ENCODE measurements at regions of chr13 and their contacts with region 1.

Region 1: DNA sequence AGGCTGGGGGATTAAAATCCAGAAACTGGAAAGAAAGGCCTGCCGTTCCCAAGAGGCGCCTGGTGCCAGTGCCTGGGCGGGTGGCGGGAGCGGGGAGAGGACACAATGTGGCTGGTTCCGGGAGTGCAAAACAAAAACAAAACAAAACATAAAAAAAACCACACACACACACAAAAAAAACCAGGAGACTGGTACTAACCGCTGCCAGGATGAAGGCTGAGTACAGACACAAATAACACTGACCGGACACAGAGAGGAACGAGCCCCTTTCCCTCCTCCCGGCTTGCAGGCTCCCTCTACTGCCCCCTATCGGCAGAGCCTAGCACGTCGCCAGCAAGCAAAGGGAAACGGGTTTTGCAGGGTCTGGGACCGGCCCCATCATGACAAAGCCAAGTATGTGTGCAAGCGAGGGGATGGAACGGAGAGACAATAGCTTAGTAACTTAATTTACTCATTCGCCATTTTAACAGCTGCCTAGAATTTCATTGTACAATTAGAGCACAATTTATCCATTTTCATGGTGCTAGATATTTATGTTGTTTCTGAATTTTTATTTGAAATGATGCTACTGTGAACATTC is 17.9 kb upstream of the ZDHHC20 start:
- DNase-seq: peak; percentile 80
- H3K4me3 ChIP-seq: peak overlapping the region; percentile 26 to 52
- H3K27ac ChIP-seq: no peak overlapping the region
- H3K4me1 ChIP-seq: no peaks in the 10 kb centered on the region; a peak in 1 of 4 replicates
- H3K27me3 ChIP-seq: no peaks in the 10 kb centered on the region
- CTCF ChIP-seq: peak; percentile 89
- EP300 ChIP-seq: no peak
- RAD21 ChIP-seq: peak; percentile 68

Region 2: DNA sequence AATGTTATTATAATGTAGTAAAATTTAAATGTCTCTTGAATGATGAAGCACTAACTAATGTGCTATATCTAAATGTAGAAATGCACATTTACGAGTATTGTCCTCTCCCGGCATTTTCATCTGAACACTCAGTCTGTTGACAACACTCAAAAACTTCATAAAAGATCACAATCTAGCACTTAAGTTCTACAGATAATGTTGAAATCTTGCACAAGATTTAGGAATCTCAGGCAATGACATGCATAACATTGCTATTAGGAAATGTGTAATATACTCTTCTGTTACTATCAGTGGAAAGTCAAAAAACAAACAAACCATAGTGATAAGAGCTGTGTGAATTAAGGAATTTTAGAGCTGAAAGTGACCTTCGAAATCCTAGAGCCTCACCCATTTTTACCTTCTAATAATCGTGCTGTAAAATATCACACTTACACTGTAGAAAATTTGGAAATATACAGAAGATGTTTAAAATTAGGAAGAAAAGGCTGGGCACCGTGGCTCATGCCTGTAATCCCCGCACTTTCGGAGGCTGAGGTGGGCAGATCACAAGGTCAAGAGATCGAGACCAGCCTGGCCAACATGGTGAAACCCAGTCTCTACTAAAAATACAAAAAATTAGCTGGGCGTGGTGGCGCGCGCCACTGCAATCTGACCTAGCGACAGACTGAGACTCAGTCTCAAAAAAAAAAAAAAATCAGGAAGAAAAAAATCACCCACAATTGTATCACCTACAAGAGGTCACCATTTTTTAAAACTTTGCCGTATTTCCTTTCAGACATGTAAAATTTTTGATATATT is 536.7 kb before region 1 on chr13:
- CTCF ChIA-PET with region 1: interaction called, 15 read pairs
- POLR2A ChIA-PET with region 1: no interaction called
- DNase-seq: no peak
- H3K4me3 ChIP-seq: no peak overlapping the region
- H3K27ac ChIP-seq: no peak overlapping the region
- H3K4me1 ChIP-seq: no peaks in the 10 kb centered on the region
- H3K27me3 ChIP-seq: no peaks in the 10 kb centered on the region
- CTCF ChIP-seq: no peak
- EP300 ChIP-seq: no peak
- RAD21 ChIP-seq: no peak

Region 3: DNA sequence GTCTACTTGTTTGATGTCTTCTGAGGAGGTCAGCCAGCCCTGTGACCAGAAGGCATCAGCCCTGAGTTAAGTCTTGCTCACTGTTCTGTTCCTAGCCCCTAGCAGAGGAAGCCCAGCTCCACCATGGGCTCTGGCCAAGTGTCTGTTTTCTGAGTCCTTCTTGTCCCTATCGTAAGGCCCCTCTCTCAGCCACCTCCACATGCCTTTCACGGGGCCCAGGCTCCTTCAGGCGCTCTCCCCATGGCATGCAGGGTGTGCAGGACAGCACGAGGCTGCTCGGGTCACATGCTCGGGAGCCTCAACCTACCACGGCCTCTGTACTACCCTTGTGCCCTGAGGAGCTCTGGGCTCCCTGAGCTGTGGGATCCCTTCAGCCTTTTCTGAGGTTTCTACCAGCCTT is 367.8 kb before region 1 on chr13:
- CTCF ChIA-PET with region 1: interaction called, 19 read pairs
- POLR2A ChIA-PET with region 1: no interaction called
- DNase-seq: no peak
- H3K4me3 ChIP-seq: no peak overlapping the region
- H3K27ac ChIP-seq: no peak overlapping the region
- H3K4me1 ChIP-seq: peaks cover 0 to 11% of the 10 kb centered on the region in 2 experiments; a peak in 2 of 4 replicates
- H3K27me3 ChIP-seq: no peaks in the 10 kb centered on the region
- CTCF ChIP-seq: no peak
- EP300 ChIP-seq: no peak
- RAD21 ChIP-seq: no peak

Region 4: GRCh38 chr13:21297914-21298831 is 178.8 kb before region 1 on chr13:
- CTCF ChIA-PET with region 1: interaction called, 25 read pairs
- POLR2A ChIA-PET with region 1: no interaction called
- DNase-seq: peak; percentile 92
- H3K4me3 ChIP-seq: peak overlapping the region; percentile 95
- H3K27ac ChIP-seq: peak overlapping the region; percentile 22 to 68; a peak in 3 of 4 replicates
- H3K4me1 ChIP-seq: peaks cover 0 to 5% of the 10 kb centered on the region in 2 experiments; a peak in 3 of 4 replicates
- H3K27me3 ChIP-seq: no peaks in the 10 kb centered on the region
- CTCF ChIP-seq: peak; percentile 82
- EP300 ChIP-seq: no peak
- RAD21 ChIP-seq: no peak

Region 5: DNA sequence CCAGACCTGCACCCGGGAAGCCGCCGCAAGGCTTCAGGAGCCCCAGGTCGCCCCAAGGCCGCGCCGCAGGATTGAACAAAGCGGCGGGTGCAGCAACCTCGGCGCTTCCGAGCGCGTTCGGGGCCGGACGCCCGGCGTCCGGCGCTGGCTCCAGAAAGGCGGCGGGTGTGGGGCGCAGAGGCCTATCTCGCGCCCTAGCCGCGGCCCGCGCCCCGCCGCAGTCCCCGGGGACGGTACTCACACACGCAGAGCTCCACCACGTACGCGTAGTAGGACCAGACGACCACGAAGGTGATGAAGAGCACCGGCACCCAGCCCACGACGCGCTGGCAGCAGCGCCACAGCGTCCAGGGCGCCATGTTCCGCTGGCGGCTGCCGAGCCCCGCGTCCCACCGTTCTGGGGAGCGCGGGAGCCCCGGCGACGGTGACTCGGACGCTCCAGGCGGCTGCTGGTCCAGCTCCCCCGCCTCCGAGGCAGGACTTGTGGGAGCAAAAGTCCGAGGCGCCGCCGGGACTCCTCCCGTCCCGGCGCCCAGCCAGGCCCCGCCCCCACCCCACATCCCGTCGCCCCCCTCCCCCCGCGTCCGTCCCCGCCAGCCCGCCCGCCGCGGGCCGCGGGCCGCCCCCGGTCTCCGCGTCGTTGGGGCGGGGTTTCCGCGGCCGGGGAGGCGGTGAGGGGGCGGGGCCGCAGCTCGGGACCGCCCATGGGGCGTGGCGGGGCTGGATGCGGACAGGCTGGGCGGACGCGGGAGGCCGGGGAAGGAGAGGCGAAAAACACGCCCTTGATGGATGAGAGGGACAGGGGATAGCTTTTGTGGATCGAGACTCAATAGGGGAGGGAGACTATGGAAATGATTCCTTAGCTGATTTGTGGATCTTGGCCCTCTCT is 17.9 kb before region 1 on chr13 and contains the start of gene ZDHHC20:
- CTCF ChIA-PET with region 1: interaction called, 15 read pairs
- POLR2A ChIA-PET with region 1: interaction called, 4 read pairs
- DNase-seq: peak; percentile 99
- H3K4me3 ChIP-seq: peak within 1 kb of the TSS; percentile 95 to 97
- H3K27ac ChIP-seq: peak within 1 kb of the TSS; percentile 72 to 89
- H3K4me1 ChIP-seq: peaks cover 2 to 7% of the 10 kb centered on the region in 2 experiments; a peak in 3 of 4 replicates
- H3K27me3 ChIP-seq: no peaks in the 10 kb centered on the region
- CTCF ChIP-seq: no peak
- EP300 ChIP-seq: no peak
- RAD21 ChIP-seq: no peak
- polyA plus RNA-seq, gene ZDHHC20: 8.7 and 10.6 TPM in 2 replicates

Region 6: DNA sequence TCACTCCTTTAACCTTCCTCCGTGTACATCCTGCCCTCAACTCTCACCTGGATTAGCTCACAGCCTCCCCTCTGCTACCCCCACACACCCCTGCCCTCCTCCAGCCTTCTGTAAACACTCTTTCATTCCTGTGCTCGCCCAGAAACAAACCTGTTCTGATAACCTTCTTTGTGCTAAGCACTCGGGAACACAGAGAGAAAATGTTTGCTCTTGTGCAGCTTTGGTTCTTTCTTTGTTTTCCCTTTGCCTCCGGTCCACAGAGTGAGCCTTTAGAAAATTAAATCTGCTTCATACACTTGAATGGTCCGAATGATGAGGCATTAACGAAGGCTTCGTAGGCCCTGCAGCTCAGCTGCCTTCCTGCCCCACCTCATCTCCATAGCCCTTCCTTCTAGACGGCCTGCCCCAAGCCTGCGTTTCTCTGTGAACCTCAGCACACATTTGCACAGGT is 11.2 kb before region 1 on chr13:
- CTCF ChIA-PET with region 1: interaction called, 15 read pairs
- POLR2A ChIA-PET with region 1: no interaction called
- DNase-seq: no peak
- H3K4me3 ChIP-seq: no peak overlapping the region
- H3K27ac ChIP-seq: no peak overlapping the region
- H3K4me1 ChIP-seq: no peaks in the 10 kb centered on the region
- H3K27me3 ChIP-seq: no peaks in the 10 kb centered on the region
- CTCF ChIP-seq: no peak
- EP300 ChIP-seq: no peak
- RAD21 ChIP-seq: no peak

Region 7: DNA sequence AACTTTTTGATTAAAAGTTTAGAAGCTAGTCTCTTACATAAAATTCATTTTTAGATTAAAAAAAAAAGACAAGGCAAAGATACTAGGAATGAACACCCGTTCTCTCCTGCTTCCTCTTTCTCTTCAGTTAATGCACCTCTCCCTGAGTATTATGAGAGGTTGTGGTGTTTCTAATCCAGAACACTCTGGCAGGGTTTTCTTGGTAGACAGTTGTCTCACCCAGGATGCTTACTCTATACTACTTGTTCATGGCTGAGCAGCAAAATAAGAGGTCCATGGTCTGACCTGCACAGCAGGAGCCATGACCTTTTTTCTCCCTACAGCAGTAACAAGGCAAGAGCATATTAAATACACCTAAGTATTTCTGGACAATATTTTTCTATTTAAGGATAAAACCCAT is 65.0 kb after region 1 on chr13:
- CTCF ChIA-PET with region 1: no interaction called
- POLR2A ChIA-PET with region 1: no interaction called
- DNase-seq: no peak
- H3K4me3 ChIP-seq: no peak overlapping the region
- H3K27ac ChIP-seq: no peak overlapping the region
- H3K4me1 ChIP-seq: no peaks in the 10 kb centered on the region; a peak in 1 of 4 replicates
- H3K27me3 ChIP-seq: no peaks in the 10 kb centered on the region
- CTCF ChIP-seq: no peak
- EP300 ChIP-seq: no peak
- RAD21 ChIP-seq: no peak